Heart right ventricle (tissue), 16 donors: ENCODE measurements at regions of chr4 and their contacts with region 1.

Region 1: DNA sequence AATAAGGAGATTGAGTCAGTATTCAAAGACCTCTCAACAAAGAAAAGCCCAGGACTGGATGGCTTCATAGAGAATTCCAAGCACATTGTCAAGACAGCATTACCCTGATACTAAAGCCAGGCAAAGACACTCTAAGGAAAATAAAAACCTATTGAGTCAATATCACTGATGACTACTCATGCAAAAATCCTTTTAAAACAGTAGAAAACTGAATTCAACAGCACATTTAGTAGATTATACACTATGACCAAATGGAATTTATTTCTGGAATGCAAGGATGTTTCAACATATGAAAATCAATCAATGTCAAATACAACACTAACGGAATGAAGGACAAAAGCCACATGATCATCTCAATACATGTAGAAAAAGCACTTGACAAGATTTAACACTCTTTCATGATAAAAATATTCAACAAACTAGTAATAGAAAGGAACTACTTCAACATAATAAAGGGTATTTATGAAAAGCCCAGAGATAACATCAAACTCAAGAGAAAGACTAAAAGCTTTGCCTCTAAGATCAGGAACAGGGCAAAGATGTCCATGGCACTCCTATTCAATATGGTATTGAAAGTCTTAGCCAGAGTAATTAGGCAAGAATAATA is 633.3 kb downstream of the ANKRD50 start:
- DNase-seq: no peak
- ATAC-seq: no peak
- H3K4me3 ChIP-seq: no peak overlapping the region
- H3K27ac ChIP-seq: no peak overlapping the region
- H3K4me1 ChIP-seq: no peaks in the 10 kb centered on the region
- H3K27me3 ChIP-seq: no peaks in the 10 kb centered on the region
- CTCF ChIP-seq: no peak

Region 2: GRCh38 chr4:123826896-123827295 is 252.4 kb before region 1 on chr4:
- intact Hi-C with region 1: no loop called
- DNase-seq: peak in 1 of 2 donors; percentile 72
- ATAC-seq: peak in 7 of 8 donors; percentile 46 to 84 (median 66)
- H3K4me3 ChIP-seq: no peak overlapping the region
- H3K27ac ChIP-seq: peak overlapping the region in 7 of 10 donors; percentile 4 to 77 (median 65)
- H3K4me1 ChIP-seq: peaks cover 5 to 42% (median 36%) of the 10 kb centered on the region in 9 donors
- H3K27me3 ChIP-seq: no peaks in the 10 kb centered on the region
- CTCF ChIP-seq: no peak

Region 3: GRCh38 chr4:123904882-123905281 is 174.4 kb before region 1 on chr4:
- intact Hi-C with region 1: loop called in 1 of 10 experiments (anchors 10 kb)
- DNase-seq: no peak
- ATAC-seq: no peak
- H3K4me3 ChIP-seq: no peak overlapping the region
- H3K27ac ChIP-seq: no peak overlapping the region
- H3K4me1 ChIP-seq: peaks cover 0 to 7% (median 0%) of the 10 kb centered on the region in 9 donors
- H3K27me3 ChIP-seq: no peaks in the 10 kb centered on the region
- CTCF ChIP-seq: no peak

Region 4: DNA sequence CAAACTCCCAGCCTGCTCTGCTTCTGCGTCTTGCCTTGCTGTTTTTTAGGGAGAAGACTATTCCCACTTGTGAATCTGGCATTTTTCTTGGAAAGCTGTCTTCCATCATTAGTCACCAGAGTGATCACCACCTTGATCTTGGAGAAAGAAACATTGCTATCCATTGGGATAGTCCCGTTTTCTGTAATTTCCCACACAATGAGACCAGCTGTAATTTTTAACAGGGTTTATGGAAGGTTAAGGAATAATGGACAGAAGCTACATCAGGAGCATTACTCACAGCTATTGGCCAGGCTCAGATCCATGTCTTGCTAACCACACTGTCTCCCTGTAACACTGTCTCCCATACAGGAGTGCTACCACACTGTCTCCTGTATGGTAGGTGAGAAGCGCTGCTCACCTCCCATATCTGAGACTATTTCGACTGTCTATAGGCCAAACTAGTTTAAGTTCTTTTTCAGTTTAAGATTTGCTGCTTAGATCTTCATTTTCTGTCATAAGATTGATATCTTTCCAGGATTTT is 159.6 kb before region 1 on chr4:
- intact Hi-C with region 1: no loop called
- DNase-seq: no peak
- ATAC-seq: peak in 1 of 8 donors; percentile 47
- H3K4me3 ChIP-seq: no peak overlapping the region
- H3K27ac ChIP-seq: no peak overlapping the region
- H3K4me1 ChIP-seq: peaks cover 0 to 38% (median 14%) of the 10 kb centered on the region in 9 donors
- H3K27me3 ChIP-seq: no peaks in the 10 kb centered on the region
- CTCF ChIP-seq: no peak

Region 5: GRCh38 chr4:124846337-124846736 is 767.1 kb after region 1 on chr4:
- intact Hi-C with region 1: no loop called
- DNase-seq: no peak
- ATAC-seq: no peak
- H3K4me3 ChIP-seq: no peak overlapping the region
- H3K27ac ChIP-seq: no peak overlapping the region
- H3K4me1 ChIP-seq: no peaks in the 10 kb centered on the region
- H3K27me3 ChIP-seq: no peaks in the 10 kb centered on the region
- CTCF ChIP-seq: no peak

Region 6: GRCh38 chr4:125445525-125445924 is 1366.2 kb after region 1 on chr4:
- intact Hi-C with region 1: no loop called
- DNase-seq: no peak
- ATAC-seq: no peak
- H3K4me3 ChIP-seq: no peak overlapping the region
- H3K27ac ChIP-seq: no peak overlapping the region
- H3K4me1 ChIP-seq: peaks cover 0 to 4% (median 0%) of the 10 kb centered on the region in 9 donors
- H3K27me3 ChIP-seq: no peaks in the 10 kb centered on the region
- CTCF ChIP-seq: no peak